PC-9 (cell line): ENCODE measurements at regions of chr9 and their contacts with region 1.

Region 1: DNA sequence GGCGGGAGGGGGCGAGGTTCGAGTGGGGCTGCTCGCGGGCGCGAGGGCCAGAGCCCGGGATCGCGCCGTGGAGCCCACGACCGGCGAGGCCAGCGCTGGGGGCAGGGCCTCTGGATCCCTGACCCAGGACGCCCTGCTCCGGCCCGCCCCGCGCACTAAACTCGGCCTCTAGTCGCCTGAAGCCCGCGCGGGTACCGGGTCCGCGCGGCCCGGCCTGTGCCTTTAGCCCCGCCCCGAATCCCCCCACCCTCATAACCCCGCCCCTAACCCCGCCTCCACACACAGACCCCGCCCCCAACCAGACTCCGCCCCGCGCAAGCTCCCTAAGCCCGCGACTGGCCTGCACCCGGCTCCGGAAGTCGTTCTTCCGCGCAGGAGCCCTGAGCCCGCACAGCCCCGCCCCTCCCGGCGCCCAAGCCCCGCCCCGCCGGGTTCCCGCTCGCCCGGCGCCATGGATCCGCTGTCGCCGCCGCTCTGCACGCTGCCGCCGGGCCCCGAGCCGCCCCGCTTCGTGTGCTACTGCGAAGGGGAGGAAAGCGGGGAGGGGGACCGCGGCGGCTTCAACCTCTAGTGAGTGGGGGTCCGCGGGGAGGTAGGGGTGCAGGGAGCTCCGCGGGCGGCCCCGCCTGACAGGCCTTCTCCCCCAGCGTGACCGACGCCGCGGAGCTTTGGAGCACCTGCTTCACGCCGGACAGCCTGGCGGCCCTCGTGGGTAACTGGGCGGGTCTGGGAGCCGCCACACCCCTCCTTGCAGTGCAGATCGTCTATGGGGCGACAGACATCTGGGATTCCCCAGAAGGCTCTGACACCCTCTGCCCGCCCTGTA is at the start of gene PAXX:
- DNase-seq: peak; percentile 77 to 97
- H3K4me3 ChIP-seq: peak within 1 kb of the TSS; percentile 88
- H3K27ac ChIP-seq: peak within 1 kb of the TSS; percentile 42
- H3K4me1 ChIP-seq: peaks cover 22% of the 10 kb centered on the region
- H3K27me3 ChIP-seq: no peaks in the 10 kb centered on the region
- CTCF ChIP-seq: no peak
- total RNA-seq, gene PAXX: 54.9 and 78.9 TPM in 2 replicates

Region 2: DNA sequence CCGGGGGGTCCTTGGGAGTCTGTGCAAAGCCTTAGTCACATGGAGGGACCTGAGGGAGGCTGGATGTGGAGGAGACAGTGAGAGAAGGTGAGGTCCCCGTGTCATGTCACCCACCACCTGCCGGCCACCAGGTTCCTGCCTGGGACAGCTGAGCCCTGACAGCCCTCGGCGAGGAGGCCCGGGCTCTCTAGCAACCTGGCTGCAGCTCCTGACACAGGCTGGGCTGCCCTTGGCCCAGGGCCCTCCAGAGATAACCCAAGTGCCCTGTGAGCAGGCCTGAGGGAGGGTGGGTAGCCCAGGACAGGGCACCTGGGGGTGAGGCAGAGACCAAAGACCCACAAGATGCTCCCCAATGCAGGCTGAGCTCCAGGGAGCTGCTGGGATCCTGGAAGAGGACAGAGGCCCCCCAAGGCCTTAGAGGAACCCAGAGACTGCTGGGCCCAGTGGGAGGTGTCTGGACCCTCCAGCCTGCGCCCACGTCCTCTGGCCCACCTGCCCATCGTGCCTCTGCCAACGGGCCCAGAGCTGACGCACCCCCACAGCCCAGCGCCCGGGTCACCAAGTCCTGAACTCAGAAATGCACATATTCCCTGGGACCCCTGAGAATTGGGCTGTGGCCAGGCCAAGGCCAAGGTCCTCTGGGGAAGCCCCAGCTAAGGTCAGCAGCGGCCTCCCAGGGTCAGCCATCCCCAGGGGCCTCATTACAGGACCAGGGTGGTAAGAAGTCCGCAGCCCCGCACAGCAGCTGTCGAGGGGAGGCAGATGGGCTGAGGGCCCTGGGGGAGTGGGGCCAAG is 23.7 kb before region 1 on chr9:
- CTCF ChIA-PET with region 1: no interaction called
- POLR2A ChIA-PET with region 1: interaction called, 17 read pairs
- intact Hi-C with region 1: no loop called
- DNase-seq: no peak
- H3K4me3 ChIP-seq: no peak overlapping the region
- H3K27ac ChIP-seq: no peak overlapping the region
- H3K4me1 ChIP-seq: peaks cover 10% of the 10 kb centered on the region
- H3K27me3 ChIP-seq: no peaks in the 10 kb centered on the region
- CTCF ChIP-seq: no peak